ENCODE measurements at regions of chr13 and their contacts with region 1.

Region 1: DNA sequence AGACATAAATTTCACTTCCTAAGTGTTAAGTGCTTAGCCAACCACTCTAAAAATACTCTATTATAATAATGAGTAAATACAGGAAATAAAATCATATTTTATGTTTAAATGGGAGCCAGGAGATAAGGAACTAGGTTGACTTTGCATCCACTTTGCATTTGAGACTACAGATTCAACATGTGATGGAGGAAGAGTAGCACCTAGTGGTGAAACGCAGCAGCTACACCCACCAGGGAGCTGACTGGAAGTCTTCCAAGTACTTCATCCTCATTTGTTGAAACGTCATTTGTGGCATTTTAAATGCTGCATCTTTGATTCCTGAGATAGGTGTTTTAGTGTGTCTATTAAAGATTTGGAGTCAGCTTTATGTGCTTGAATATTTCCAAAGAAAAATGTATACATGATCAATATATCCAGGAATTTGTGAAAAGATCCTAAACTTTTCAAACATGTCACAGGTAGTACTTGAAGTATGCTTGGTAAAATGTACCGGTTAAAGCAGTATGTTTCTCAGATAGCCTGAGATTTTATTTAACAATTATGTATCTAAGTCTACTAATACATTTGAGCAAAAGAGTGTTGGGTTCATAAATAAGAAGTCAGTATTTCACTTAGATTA is 17.4 kb upstream of the KCTD12 start:
- DNase-seq: peak; percentile 90
- H3K4me3 Mint-ChIP-seq: no peak overlapping the region
- H3K27ac Mint-ChIP-seq: no peak overlapping the region
- H3K4me1 Mint-ChIP-seq: no peaks in the 10 kb centered on the region
- H3K27me3 Mint-ChIP-seq: peaks cover 30% of the 10 kb centered on the region

Region 2: DNA sequence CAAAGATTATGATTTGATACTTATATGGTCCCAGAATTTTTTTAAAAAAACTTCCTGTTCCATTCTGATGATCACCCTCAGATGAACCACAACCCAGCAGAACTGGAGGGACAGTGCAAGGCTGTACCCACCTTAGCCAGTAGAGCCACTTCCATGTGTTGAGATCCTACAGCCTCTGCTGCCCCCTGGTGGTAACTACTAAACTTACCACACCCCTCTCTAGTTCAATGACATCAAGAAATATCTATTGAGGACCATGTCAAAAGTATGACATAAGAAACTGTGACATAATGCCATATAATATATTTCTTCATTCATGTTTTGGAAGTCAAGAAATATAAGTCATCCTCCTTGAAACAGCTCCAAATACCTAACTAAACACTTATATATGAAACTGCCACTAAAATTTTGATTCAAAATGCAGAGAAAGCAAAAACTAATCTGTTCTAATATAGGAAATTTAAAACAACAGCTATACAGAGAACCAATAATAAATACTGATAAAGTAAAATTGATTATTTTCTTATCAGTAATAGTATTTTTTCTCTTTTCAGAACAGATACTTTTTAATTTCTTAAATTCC is 430.0 kb before region 1 on chr13:
- intact Hi-C with region 1: loop called (anchors 5 kb)
- DNase-seq: peak; percentile 89
- H3K4me3 Mint-ChIP-seq: no peak overlapping the region
- H3K27ac Mint-ChIP-seq: no peak overlapping the region
- H3K4me1 Mint-ChIP-seq: no peaks in the 10 kb centered on the region
- H3K27me3 Mint-ChIP-seq: peaks cover 1% of the 10 kb centered on the region

Region 3: DNA sequence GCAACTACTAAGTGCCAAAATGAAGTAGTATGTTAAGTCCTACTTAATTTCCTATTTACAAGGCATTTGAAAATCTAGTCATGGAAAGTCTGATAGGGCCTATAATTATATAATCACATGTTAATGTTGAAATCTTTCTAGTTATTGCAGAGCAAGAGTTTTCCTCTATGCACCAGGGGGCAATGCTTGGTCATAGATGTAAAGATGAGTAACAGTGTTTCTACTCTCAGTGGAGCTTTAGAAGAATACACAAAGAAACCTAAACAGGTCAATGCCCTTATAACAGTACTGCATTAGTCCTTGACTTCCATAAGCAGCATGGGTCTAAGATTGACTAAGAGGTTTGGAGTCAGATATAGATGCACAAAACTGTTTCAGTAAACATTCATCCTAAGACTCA is 236.1 kb before region 1 on chr13:
- intact Hi-C with region 1: loop called (anchors 5 kb)
- DNase-seq: no peak
- H3K4me3 Mint-ChIP-seq: no peak overlapping the region
- H3K27ac Mint-ChIP-seq: no peak overlapping the region
- H3K4me1 Mint-ChIP-seq: no peaks in the 10 kb centered on the region
- H3K27me3 Mint-ChIP-seq: peaks cover 6% of the 10 kb centered on the region

Region 4: DNA sequence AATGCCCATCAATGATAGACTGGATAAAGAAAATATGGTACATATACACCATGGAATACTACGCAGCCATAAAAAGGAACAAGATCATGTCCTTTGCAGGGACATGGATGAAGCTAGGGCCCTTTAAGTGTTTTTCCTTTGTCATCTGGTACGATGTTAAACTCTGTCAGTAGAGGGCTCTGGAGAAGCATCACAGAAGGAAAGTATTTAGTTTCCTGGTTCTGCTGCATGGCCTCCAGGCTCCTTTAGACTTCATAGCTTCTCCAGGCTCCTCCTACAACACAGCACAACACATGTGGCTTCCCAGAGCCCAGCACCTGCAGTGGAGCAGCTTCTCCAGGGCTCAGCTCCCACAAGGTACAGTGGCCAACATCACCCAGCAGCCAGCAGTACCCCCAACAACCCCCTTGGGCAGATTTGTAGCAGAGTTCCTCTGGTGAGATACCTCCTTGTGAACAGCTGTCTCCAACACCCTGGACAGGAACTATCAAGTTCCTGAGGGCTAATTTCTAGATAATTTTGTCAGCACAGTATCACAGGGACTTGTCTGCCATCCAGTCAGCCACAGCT is 80.9 kb before region 1 on chr13:
- intact Hi-C with region 1: loop called (anchors 1 kb)
- DNase-seq: peak; percentile 58
- H3K4me3 Mint-ChIP-seq: no peak overlapping the region
- H3K27ac Mint-ChIP-seq: no peak overlapping the region
- H3K4me1 Mint-ChIP-seq: no peaks in the 10 kb centered on the region
- H3K27me3 Mint-ChIP-seq: peaks cover 6% of the 10 kb centered on the region